Heart left ventricle (tissue), 16 donors: ENCODE measurements at regions of chr17 and their contacts with region 1.

Region 1: GRCh38 chr17:32486111-32486700 is 587 bp upstream of the CDK5R1 start:
- DNase-seq: peak; percentile 72 to 87 (median 74)
- ATAC-seq: peak; percentile 49 to 83 (median 72)
- H3K4me3 ChIP-seq: peak overlapping the region in 11 of 12 donors; percentile 22 to 86 (median 62)
- H3K27ac ChIP-seq: peak overlapping the region; percentile 42 to 81 (median 73)
- H3K4me1 ChIP-seq: peaks cover 4 to 44% (median 27%) of the 10 kb centered on the region in 12 donors
- H3K27me3 ChIP-seq: no peaks in the 10 kb centered on the region
- CTCF ChIP-seq: no peak
- POLR2A ChIP-seq: peak in 1 of 2 donors; percentile 26

Region 2: GRCh38 chr17:32240750-32241149 is 245.5 kb before region 1 on chr17:
- intact Hi-C with region 1: no loop called
- DNase-seq: peak; percentile 64 to 85 (median 67)
- ATAC-seq: peak; percentile 64 to 96 (median 94)
- H3K4me3 ChIP-seq: no peak overlapping the region
- H3K27ac ChIP-seq: no peak overlapping the region
- H3K4me1 ChIP-seq: peaks cover 0 to 15% (median 0%) of the 10 kb centered on the region in 12 donors
- H3K27me3 ChIP-seq: no peaks in the 10 kb centered on the region
- CTCF ChIP-seq: peak in 2 of 12 donors; percentile 13 to 21
- POLR2A ChIP-seq: no peak

Region 3: DNA sequence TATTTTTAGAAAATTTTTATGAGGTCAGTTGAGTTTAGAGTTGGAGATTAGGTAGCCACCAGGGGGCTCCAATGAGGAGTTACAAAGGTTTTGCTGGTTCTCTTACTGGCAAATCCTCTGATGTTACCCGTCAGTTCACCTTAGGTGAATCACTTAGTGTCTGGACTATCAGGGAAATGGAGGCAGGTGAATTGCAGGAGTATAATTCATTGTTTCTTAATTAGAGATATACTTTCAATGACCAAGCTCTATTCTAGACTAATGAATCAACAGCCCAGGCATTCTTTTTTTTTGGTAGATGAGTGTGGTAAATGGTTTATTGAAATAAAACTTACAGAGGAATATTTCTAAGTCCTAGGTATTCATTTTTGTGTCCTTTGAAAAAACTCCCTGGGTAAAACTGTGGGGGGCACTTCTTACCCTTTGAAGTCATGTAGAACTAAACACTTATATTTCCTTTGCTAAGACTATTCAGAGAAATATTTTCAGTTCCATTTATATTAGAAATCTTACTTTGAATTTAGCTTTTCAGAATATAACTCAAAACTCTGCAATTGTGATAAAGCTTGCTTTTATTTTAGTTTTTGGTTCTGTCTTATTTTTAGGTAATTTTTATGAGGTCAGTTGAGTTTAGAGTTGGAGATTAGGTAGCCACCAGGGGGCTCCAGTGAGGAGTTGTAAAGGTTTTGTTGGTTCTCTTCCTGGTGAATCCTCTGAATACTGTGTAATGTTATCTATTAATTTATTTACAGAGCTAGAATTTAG is 24.2 kb before region 1 on chr17:
- intact Hi-C with region 1: no loop called
- DNase-seq: peak in 2 of 5 donors; percentile 32 to 35
- ATAC-seq: peak in 2 of 4 donors; percentile 50 to 64
- H3K4me3 ChIP-seq: no peak overlapping the region
- H3K27ac ChIP-seq: no peak overlapping the region
- H3K4me1 ChIP-seq: peaks cover 0 to 13% (median 0%) of the 10 kb centered on the region in 12 donors
- H3K27me3 ChIP-seq: no peaks in the 10 kb centered on the region
- CTCF ChIP-seq: peak; percentile 41 to 67 (median 54)
- POLR2A ChIP-seq: no peak

Region 4: DNA sequence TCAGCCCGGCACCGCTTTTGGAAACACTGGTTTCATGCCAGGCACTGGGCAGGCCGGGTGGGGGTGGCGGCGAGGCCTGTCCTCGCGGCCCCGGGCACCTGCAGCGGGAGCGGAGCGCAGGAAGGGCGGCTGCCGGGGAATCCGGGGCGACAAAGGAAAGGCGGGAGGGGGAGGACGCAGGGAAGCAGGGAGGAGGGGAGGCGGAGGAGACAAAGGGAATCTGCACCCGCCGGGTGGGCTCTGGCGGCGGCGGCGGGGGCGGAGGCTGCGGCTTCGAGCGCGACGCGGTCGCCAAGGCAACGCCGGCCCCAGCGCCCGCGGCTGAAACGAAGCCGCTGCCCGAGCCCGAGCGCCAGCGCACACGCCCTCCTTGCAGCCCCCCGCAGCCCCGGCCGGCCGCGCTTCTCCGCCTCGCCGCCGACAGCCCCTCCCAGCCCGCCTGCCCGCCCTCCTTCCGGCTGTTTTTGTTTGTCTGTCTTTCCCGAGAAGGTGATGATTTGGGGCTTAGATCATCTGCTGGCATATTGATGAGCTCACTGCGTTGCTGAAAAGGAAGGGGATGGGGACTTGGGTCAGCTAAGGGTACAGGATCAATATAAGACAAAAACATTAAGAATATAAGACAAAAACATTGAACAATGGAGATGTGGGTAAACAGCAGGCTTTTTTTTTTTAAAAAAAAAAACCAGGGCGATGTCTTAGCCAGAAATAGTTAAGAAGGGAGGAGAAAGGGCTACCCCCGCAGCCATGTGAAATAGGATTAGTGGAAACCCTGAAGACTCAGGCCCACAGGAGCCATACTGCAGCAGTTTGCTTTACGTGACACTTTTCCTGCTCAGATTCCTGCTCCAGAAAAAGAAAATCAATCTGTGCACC is 33.3 kb after region 1 on chr17:
- intact Hi-C with region 1: loop called in 1 of 10 experiments (anchors 5 kb)
- DNase-seq: peak; percentile 48 to 85 (median 54)
- ATAC-seq: peak in 3 of 4 donors; percentile 55 to 75 (median 69)
- H3K4me3 ChIP-seq: peak overlapping the region; percentile 22 to 65 (median 56)
- H3K27ac ChIP-seq: peak overlapping the region in 6 of 12 donors; percentile 3 to 46 (median 33)
- H3K4me1 ChIP-seq: peaks cover 3 to 42% (median 22%) of the 10 kb centered on the region in 12 donors
- H3K27me3 ChIP-seq: peaks cover 0 to 4% (median 0%) of the 10 kb centered on the region in 9 donors
- CTCF ChIP-seq: no peak
- POLR2A ChIP-seq: no peak

Region 5: DNA sequence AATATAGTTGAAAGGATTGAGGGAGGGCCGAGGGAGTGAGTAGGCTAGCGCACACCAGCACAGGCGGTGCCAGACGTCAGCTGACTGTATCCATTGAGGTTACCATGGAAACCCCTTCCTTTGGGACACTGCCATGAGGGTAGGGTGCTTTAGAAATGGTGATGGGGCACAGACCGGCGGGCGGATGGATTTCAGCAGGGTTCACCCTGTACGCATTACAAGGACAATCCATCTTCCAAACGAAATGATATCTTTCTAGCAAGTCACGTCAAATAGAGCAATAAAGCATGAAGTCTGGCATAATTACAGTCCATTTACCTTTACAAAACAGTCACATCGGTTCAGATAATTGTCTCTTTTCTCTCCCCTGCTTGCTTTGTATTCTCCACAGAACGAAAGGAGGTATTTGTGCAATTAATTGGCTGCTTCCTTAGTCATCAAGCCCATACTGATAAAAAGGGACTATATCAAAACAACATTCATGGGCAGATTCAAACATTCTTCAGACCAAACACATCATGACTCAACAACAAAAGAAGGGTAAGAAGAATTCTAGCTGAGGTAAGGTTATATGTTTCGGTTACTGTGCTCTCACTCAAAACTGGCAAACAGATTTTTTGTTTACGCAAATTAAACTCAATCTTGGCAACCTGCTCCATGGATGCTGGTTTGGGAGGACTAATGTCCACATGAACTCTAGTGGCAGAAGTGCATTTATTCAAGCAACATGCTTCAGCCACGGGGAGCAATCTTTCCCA is 141.2 kb after region 1 on chr17:
- intact Hi-C with region 1: loop called in 1 of 10 experiments (anchors 10 kb)
- DNase-seq: no peak
- ATAC-seq: no peak
- H3K4me3 ChIP-seq: no peak overlapping the region
- H3K27ac ChIP-seq: no peak overlapping the region
- H3K4me1 ChIP-seq: peaks cover 0 to 5% (median 0%) of the 10 kb centered on the region in 12 donors
- H3K27me3 ChIP-seq: no peaks in the 10 kb centered on the region
- CTCF ChIP-seq: no peak
- POLR2A ChIP-seq: no peak

Region 6: DNA sequence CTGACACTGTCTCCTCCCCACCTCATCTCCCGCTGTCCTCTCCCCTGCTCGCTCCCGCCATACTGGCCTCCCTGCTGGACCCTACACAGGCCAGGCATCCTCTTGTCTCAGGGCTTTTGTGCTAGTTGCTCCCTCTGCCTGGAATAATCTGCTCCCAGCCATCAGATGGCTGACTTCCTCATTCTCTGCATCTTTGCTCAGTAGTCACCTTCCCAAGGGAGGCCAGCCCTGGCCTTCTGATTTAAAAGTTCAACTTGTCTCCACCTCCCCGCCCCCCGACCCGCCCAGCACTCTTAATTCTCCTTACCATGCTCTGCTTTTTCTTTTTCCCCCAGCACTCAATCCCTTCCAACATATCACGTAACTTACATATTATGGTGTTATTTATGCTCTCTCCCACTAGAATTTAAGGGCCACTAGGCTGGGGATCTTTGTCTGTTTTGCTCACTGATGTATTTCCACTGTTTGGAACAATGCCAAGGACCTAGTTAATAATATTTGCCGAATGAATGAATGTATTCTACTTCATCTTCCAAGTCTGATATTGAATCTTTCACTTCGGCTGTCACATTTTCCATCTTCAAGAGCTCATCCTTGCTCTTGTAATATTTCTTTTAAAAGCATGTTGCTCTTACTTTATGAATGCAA is 178.9 kb after region 1 on chr17:
- intact Hi-C with region 1: loop called in 1 of 10 experiments (anchors 10 kb)
- DNase-seq: no peak
- ATAC-seq: peak in 1 of 4 donors; percentile 29
- H3K4me3 ChIP-seq: no peak overlapping the region
- H3K27ac ChIP-seq: no peak overlapping the region
- H3K4me1 ChIP-seq: no peaks in the 10 kb centered on the region
- H3K27me3 ChIP-seq: no peaks in the 10 kb centered on the region
- CTCF ChIP-seq: no peak
- POLR2A ChIP-seq: no peak

Region 7: GRCh38 chr17:32870027-32870670 is 383.9 kb after region 1 on chr17:
- intact Hi-C with region 1: loop called in 1 of 10 experiments (anchors 5 kb)
- DNase-seq: peak in 3 of 5 donors; percentile 23 to 39 (median 34)
- ATAC-seq: peak; percentile 59 to 77 (median 72)
- H3K4me3 ChIP-seq: no peak overlapping the region
- H3K27ac ChIP-seq: peak overlapping the region; percentile 10 to 79 (median 53)
- H3K4me1 ChIP-seq: peaks cover 0 to 58% (median 27%) of the 10 kb centered on the region in 12 donors
- H3K27me3 ChIP-seq: no peaks in the 10 kb centered on the region
- CTCF ChIP-seq: no peak
- POLR2A ChIP-seq: no peak